HepG2 (cell line): ENCODE measurements at regions of chr2 and their contacts with region 1.

Region 1: DNA sequence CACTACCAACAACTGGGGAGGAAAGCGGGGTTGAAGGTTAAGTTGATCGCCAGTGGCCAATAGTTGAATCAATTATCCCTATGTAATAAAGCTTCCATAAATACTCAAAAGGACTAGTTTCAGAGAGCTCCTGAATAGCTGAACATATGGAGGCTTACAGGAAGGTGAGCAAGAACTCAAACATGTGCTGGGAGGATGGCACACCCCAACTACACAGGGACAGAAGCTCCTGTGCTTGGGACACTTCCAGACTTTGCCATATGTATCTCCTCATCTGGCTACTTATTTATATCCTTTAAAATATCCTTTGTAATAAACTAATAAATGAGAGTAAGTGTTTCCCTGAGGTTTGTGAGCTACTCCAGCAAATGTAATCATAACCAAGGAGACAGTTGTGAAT is 115.7 kb downstream of the HNMT start:
- DNase-seq: no peak
- ATAC-seq: no peak
- H3K4me3 ChIP-seq: no peak overlapping the region
- H3K27ac ChIP-seq: no peak overlapping the region
- H3K4me1 ChIP-seq: peaks cover 20% of the 10 kb centered on the region
- H3K27me3 ChIP-seq: no peaks in the 10 kb centered on the region
- CTCF ChIP-seq: no peak
- EP300 ChIP-seq: no peak
- POLR2A ChIP-seq: no peak
- RAD21 ChIP-seq: no peak

Region 2: GRCh38 chr2:137566387-137566786 is 513.6 kb before region 1 on chr2:
- CTCF ChIA-PET with region 1: no interaction called
- POLR2A ChIA-PET with region 1: no interaction called
- in situ Hi-C with region 1: no loop called
- intact Hi-C with region 1: no loop called
- DNase-seq: no peak
- ATAC-seq: no peak
- H3K4me3 ChIP-seq: no peak overlapping the region
- H3K27ac ChIP-seq: no peak overlapping the region
- H3K4me1 ChIP-seq: no peaks in the 10 kb centered on the region
- H3K27me3 ChIP-seq: no peaks in the 10 kb centered on the region
- CTCF ChIP-seq: no peak
- EP300 ChIP-seq: no peak
- POLR2A ChIP-seq: no peak
- RAD21 ChIP-seq: no peak

Region 3: DNA sequence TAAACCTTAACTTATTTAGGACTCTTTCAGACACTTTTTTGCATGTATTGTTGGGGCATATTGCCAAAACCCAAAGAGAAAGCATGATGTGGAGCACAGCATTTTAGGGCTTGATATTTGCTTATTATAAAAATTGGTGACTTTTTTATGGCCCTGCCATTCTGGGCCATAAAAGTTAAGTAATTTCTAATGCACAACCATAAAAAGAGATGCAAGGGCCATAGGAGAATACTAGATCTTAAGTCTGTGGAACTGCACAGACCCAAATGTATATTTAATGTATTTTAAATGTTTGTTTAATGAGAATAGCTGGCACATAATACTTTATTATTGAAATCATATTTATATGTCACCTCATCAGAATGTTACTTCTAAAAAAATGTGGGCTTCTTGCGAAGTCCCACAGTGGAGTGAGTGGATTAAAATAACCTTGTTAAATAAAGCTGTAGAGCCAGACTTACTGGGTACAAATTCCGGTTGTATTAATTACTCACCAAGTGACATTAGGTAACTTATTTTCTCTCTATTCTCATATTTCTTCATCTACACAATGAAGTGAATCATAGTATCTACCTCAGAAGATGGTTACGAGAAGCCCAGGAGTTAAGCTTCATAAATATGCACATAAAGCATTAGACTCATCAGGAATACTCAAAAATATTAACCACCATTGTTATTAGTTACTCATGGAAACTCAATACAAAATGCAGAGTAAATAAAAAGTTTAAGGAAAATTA is 63.5 kb before region 1 on chr2:
- CTCF ChIA-PET with region 1: no interaction called
- POLR2A ChIA-PET with region 1: no interaction called
- in situ Hi-C with region 1: no loop called
- intact Hi-C with region 1: loop called (anchors 5 kb)
- DNase-seq: no peak
- ATAC-seq: no peak
- H3K4me3 ChIP-seq: no peak overlapping the region
- H3K27ac ChIP-seq: no peak overlapping the region
- H3K4me1 ChIP-seq: no peaks in the 10 kb centered on the region
- H3K27me3 ChIP-seq: no peaks in the 10 kb centered on the region
- CTCF ChIP-seq: no peak
- EP300 ChIP-seq: no peak
- POLR2A ChIP-seq: no peak
- RAD21 ChIP-seq: no peak

Region 4: GRCh38 chr2:138223316-138223715 is 143.3 kb after region 1 on chr2:
- CTCF ChIA-PET with region 1: no interaction called
- POLR2A ChIA-PET with region 1: no interaction called
- in situ Hi-C with region 1: no loop called
- intact Hi-C with region 1: no loop called
- DNase-seq: no peak
- ATAC-seq: no peak
- H3K4me3 ChIP-seq: no peak overlapping the region
- H3K27ac ChIP-seq: no peak overlapping the region
- H3K4me1 ChIP-seq: peaks cover 34% of the 10 kb centered on the region
- H3K27me3 ChIP-seq: no peaks in the 10 kb centered on the region
- CTCF ChIP-seq: no peak
- EP300 ChIP-seq: no peak
- POLR2A ChIP-seq: no peak
- RAD21 ChIP-seq: no peak

Region 5: GRCh38 chr2:138853761-138854160 is 773.8 kb after region 1 on chr2:
- CTCF ChIA-PET with region 1: no interaction called
- POLR2A ChIA-PET with region 1: no interaction called
- in situ Hi-C with region 1: no loop called
- intact Hi-C with region 1: no loop called
- DNase-seq: no peak
- ATAC-seq: no peak
- H3K4me3 ChIP-seq: no peak overlapping the region
- H3K27ac ChIP-seq: no peak overlapping the region
- H3K4me1 ChIP-seq: no peaks in the 10 kb centered on the region
- H3K27me3 ChIP-seq: no peaks in the 10 kb centered on the region
- CTCF ChIP-seq: no peak
- EP300 ChIP-seq: no peak
- POLR2A ChIP-seq: no peak
- RAD21 ChIP-seq: no peak